Activated CD4-positive, alpha-beta T cell treated with anti-CD3 and anti-CD28 coated beads, Interleukin-2, amount 10 ng/mL, durations not matched to agents 24 days and 14 days (primary cell): ENCODE measurements at regions of chrX and their contacts with region 1.

Region 1: DNA sequence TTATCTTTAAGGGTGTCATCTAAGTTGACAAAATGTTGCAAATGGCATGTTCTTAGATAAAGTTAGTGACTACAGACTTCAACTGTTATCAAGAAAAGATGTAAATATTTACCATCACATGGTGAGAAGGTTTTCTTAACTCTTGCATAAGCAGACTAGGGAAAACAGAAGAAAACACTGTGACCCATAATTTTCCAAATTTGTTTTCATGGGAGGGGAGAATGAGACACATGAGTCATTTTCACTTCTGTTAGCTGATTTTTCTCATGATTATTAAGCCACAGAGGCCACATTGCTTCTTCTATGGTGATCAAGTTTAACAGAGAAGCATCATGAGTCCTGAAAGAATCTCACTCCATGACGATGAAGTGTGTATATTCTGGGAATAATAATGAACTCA is 30.2 kb upstream of the SYTL5 start:
- DNase-seq: no peak
- H3K4me3 Mint-ChIP-seq: no peak overlapping the region
- H3K27ac Mint-ChIP-seq: no peak overlapping the region
- H3K4me1 Mint-ChIP-seq: peaks cover 14% of the 10 kb centered on the region
- H3K27me3 Mint-ChIP-seq: peaks cover 2% of the 10 kb centered on the region

Region 2: DNA sequence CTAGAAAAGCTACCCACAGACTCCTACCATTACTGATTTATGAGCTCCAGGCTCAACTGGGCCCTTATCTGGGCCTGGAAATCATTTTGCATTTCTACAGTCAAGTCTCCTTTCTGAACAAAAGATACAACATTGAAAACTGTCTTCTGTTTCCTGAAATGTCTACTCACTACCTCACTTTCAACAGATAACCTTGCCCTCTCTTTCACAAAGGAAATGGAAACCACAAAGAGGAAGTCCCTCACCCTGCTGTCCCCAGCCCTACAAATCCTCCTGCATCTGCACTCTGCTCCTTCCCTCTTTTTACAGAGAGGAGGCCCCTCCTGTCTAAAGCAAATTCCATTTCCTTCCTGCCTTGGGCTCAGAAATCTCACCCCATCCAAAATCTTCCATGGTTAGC is 221.1 kb before region 1 on chrX:
- intact Hi-C with region 1: loop called (anchors 1 kb)
- DNase-seq: peak; percentile 76
- H3K4me3 Mint-ChIP-seq: no peak overlapping the region
- H3K27ac Mint-ChIP-seq: no peak overlapping the region
- H3K4me1 Mint-ChIP-seq: peaks cover 10% of the 10 kb centered on the region
- H3K27me3 Mint-ChIP-seq: no peaks in the 10 kb centered on the region

Region 3: DNA sequence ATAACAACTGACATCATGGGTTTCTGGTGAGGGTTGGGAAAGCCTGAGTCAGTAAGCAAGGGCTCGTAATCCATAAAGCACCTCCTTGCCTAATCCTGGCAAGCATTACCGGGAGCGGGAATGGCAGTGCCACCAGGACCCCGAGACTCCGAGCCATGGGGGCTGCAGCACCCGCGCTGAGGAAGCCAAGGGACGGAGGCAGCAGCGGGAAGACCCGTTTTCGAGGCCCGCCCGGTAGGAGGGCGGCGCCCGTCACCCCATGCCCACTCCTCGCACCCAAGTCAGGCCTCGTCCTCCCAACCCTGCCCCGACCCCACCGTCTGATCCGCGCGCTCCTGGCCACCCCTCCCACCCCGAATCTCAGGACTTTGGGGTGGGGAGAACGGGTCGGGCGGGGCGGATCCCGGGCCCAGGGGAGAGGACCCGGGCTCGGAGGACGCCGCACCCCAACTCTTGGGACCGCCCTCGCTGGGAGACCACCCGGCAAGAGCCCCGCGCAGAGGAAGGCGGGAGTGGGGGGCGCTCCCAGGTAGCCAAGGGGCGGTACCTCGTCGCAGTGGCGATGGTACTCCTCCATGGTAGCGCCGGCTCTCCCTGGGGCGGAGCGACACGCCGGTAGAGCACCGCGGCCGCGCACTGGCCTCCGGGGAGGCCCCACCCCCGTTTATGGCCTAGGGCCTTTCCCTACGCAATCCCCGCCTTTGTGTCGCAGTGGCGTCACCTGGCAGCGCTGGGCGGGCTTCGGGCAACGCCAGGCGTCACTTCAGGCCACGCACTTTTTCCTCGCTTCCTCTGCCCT is 129.0 kb before region 1 on chrX and contains the start of gene DYNLT3:
- intact Hi-C with region 1: loop called (anchors 5 kb)
- DNase-seq: peak; percentile 93
- H3K4me3 Mint-ChIP-seq: peak within 1 kb of the TSS; percentile 79
- H3K27ac Mint-ChIP-seq: peak within 1 kb of the TSS; percentile 90
- H3K4me1 Mint-ChIP-seq: peaks cover 13% of the 10 kb centered on the region
- H3K27me3 Mint-ChIP-seq: no peaks in the 10 kb centered on the region
- total RNA-seq, gene DYNLT3: 13.3 and 14.5 TPM in 2 replicates

Region 4: DNA sequence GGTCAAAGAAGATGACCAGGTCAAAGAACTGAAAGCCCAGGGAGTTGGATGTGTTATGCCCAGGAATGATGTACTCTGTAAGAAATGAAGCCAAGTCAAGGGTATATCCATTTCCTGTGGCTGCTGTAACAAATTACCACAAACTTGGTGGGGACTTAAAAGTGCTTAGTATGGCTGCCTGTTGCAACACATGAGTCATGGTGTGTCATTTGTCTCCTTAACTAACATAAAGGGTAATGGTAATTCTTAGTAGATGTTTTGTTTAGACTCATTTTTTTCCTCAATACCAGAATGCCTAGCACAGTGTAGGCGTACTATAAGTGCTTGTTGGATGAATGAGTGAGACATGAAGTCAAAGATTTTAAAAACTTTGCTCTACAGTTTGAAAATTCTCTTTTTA is 75.9 kb after region 1 on chrX:
- intact Hi-C with region 1: loop called (anchors 5 kb)
- DNase-seq: no peak
- H3K4me3 Mint-ChIP-seq: no peak overlapping the region
- H3K27ac Mint-ChIP-seq: no peak overlapping the region
- H3K4me1 Mint-ChIP-seq: no peaks in the 10 kb centered on the region
- H3K27me3 Mint-ChIP-seq: peaks cover 2% of the 10 kb centered on the region